ENCODE measurements at regions of chr19 and their contacts with region 1.

Region 1: DNA sequence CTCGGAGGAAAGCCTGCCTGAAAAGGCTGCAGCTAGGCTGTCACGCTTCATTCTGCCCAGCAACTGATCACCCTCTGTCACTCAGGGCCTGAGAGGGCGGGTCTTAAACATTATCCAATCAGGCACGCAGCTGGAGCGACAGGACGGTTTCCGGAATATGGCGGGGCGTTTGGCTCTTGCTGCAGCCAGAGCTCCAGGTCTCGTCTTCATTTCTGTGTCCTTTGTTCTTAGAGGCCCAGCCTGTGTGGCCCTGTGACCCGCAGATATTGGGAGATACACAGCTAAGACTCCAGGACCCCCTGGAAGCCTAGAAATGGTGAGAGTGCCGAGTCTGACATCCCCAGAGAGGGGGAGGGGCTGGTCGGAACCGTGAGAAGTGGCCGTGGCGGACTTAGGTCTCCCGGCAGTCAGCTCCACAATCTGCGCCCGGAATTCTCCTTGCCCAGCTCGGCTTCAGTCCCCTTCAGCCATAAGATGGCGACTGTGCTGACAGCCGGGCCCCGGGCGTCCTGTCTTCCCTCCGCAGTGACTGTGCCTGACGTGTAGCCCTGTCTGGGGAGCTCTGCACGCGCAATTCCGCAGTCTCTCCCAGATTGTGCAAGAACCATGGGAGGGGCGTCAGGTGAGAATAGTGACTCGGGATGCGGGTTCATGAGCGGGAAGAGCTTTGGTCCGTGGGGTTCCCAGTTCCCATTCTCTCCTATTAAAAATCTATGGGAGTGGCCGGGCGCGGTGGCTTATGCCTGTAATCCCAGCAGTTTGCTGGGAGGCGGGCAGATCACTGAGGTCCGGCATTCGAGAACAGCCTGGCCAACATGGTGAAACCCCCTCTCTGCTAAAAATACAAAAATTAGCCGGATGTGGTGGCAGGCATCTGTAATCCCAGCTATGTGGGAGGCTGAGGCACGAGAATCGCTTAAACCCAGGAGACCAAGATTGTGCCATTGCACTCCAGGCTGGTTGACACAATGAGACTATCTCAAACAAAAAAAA is at the start of gene ZNF429:
- DNase-seq: peak; percentile 88 to 96
- ATAC-seq: peak; percentile 99 to 100 (median 100)
- H3K4me3 ChIP-seq: peak within 1 kb of the TSS; percentile 56 to 95 (median 86)
- H3K27ac ChIP-seq: peak within 1 kb of the TSS; percentile 86 to 98 (median 92)
- H3K4me1 ChIP-seq: peaks cover 0 to 41% (median 28%) of the 10 kb centered on the region in 9 donors
- H3K27me3 ChIP-seq: no peaks in the 10 kb centered on the region
- CTCF ChIP-seq: peak in 5 of 9 donors; percentile 5 to 37 (median 11)
- total RNA-seq, gene ZNF429: 5.8 to 12.2 (median 8.6) TPM

Region 2: DNA sequence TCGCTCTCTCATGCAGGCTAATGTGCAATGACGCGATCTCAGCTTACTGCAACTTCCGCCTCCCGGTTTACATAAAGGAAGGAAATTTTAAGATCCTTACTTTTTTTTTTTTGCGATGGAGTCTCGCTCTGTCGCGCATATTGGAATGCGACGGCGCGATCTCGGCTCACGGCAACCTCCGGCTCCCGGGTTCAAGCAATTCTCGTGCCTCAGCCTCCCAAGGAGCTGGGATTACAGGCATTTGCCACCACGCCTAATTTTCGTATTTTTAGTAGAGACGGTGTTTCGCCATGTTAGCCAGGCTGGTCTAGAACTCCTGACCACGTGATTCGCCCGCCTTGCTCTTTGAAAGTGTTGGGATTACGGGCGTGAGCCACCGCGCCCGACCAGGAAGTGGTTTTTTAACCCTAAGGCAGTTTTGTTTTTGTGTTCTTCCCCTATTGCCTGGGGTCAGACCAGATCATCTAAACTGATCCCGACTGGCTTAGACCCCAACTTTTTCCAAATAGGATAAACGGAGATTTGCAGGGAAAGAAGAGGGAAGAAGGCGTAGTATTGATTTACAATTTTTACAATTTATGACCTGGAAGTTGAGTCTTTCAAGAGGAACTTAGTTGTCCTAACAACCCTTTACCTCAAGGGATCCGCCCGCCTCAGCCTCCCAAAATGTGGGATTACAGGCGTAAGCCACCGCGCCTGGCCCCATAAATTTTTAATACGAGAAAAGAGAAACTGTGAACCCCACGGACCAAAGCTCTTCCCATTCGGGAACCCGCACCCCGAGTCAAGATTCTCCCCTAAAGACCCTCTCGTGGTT is 1082.2 kb before region 1 on chr19:
- intact Hi-C with region 1: loop called in 1 of 10 experiments (anchors 5 kb)
- DNase-seq: peak; percentile 52 to 57
- ATAC-seq: peak; percentile 52 to 79 (median 69)
- H3K4me3 ChIP-seq: peak overlapping the region; percentile 10 to 80 (median 68)
- H3K27ac ChIP-seq: peak overlapping the region; percentile 49 to 90 (median 81)
- H3K4me1 ChIP-seq: peaks cover 0 to 7% (median 0%) of the 10 kb centered on the region in 9 donors
- H3K27me3 ChIP-seq: no peaks in the 10 kb centered on the region
- CTCF ChIP-seq: no peak

Region 3: GRCh38 chr19:21532904-21533303 is 27.1 kb after region 1 on chr19:
- intact Hi-C with region 1: no loop called
- DNase-seq: no peak
- ATAC-seq: no peak
- H3K4me3 ChIP-seq: no peak overlapping the region
- H3K27ac ChIP-seq: no peak overlapping the region
- H3K4me1 ChIP-seq: no peaks in the 10 kb centered on the region
- H3K27me3 ChIP-seq: no peaks in the 10 kb centered on the region
- CTCF ChIP-seq: no peak

Region 4: DNA sequence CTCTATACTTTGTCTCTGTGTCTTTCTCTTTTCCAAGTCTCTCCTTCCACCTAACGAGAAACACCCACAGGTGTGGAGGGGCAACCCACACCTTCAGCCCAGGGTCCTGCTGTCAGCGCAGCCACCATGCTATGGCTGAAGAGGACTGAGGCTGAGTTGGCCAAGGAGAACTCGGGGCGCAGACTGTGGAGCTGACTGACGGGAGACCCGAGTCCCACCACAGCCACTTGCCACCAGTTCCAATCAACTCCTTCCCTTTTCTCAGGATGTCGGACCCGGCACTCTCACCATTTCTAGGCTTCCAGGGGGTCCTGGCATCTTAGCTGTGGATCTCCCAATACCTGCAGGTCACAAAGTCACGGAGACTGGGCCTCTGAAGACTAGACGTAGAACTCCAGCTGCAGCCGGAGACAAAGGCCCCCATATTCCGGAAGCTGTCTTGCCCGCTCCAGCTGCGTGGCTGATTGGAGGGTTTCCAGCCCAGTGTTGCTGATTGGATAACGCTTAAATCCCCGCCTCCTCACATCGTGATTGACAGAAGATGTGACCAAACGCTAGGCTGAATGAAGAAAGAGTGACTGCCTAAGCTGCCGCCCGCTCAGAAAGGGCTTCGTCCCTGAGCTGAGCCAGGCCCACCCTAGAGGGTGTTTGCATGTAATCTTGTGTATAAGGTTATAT is 63.2 kb after region 1 on chr19:
- intact Hi-C with region 1: loop called in 1 of 10 experiments (anchors 10 kb)
- DNase-seq: peak; percentile 86 to 94
- ATAC-seq: peak; percentile 97 to 100 (median 98)
- H3K4me3 ChIP-seq: peak overlapping the region; percentile 33 to 88 (median 52)
- H3K27ac ChIP-seq: peak overlapping the region in 7 of 10 donors; percentile 40 to 89 (median 76)
- H3K4me1 ChIP-seq: peaks cover 0 to 35% (median 0%) of the 10 kb centered on the region in 9 donors
- H3K27me3 ChIP-seq: no peaks in the 10 kb centered on the region
- CTCF ChIP-seq: no peak

Region 5: GRCh38 chr19:21604351-21604926 is 98.7 kb after region 1 on chr19:
- intact Hi-C with region 1: loop called in 1 of 10 experiments (anchors 10 kb)
- DNase-seq: peak in 1 of 2 donors; percentile 14
- ATAC-seq: peak; percentile 26 to 65 (median 48)
- H3K4me3 ChIP-seq: peak overlapping the region; percentile 25 to 60 (median 49)
- H3K27ac ChIP-seq: peak overlapping the region; percentile 62 to 92 (median 80)
- H3K4me1 ChIP-seq: peaks cover 6 to 34% (median 23%) of the 10 kb centered on the region in 9 donors
- H3K27me3 ChIP-seq: no peaks in the 10 kb centered on the region
- CTCF ChIP-seq: no peak

Measured in heart right ventricle (tissue), 16 donors.